Activated T-helper 1 cell treated with anti-CD3 and anti-CD28 coated beads, Interleukin-12 subunit alpha, Interleukin-12 subunit beta, Interleukin-2, Interleukin-4 antibody, amounts not matched to agents 30 ng/mL and 10 ng/mL and 1 ng/mL, durations not matched to agents 14 hours and 24 hours and 36 hours (primary cell): ENCODE measurements at regions of chr9 and their contacts with region 1.

Region 1: DNA sequence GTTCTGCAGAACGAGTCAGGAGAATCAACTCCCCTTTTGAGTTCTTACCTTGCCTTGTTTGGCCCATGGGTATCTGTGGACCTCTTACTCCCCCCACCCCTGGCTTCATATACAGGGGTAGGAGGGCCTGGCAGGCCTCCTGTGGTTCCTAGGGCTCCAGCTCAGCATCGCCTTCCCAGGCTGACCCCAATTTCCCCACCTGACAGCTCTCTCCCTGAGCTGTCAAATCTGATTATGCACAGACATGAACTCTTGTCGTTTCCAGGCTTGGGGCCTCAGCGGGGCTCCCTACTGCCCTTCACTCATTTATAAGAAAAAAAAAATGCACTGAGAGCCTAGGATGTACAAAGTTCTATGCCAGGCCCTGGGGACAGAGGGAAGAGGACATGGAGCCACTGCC is 67.9 kb downstream of the PTPN3 start:
- DNase-seq: no peak
- H3K4me3 Mint-ChIP-seq: no peak overlapping the region
- H3K27ac Mint-ChIP-seq: no peak overlapping the region
- H3K4me1 Mint-ChIP-seq: no peaks in the 10 kb centered on the region
- H3K27me3 Mint-ChIP-seq: peaks cover 12% of the 10 kb centered on the region

Region 2: GRCh38 chr9:109052416-109052815 is 377.8 kb before region 1 on chr9:
- intact Hi-C with region 1: no loop called
- DNase-seq: no peak
- H3K4me3 Mint-ChIP-seq: no peak overlapping the region
- H3K27ac Mint-ChIP-seq: no peak overlapping the region
- H3K4me1 Mint-ChIP-seq: peaks cover 5% of the 10 kb centered on the region
- H3K27me3 Mint-ChIP-seq: no peaks in the 10 kb centered on the region

Region 3: DNA sequence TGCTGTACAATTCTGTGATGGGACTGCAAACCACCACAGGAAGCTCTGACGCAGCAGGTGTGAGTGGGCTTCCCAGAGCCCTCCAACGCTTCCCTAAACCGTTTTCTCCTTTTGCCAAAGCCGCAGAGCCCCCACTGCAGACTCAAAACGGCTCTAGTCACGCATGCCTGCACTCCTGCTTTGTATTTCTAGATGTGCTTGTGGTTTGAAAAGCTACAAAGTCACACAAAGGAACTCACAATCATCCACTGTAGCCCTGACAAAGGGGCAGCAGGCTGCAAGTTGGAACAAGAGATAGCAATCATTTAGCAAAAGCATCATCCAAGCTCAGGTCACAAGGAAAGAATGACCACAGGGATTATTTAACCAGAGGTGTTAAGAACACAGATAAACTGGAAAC is 11.4 kb before region 1 on chr9:
- intact Hi-C with region 1: loop called (anchors 2 kb)
- DNase-seq: no peak
- H3K4me3 Mint-ChIP-seq: no peak overlapping the region
- H3K27ac Mint-ChIP-seq: peak overlapping the region; percentile 70
- H3K4me1 Mint-ChIP-seq: peaks cover 56% of the 10 kb centered on the region
- H3K27me3 Mint-ChIP-seq: no peaks in the 10 kb centered on the region